H1 (cell line): ENCODE measurements at regions of chr4 and their contacts with region 1.

Region 1: GRCh38 chr4:25986807-25987206 is 72.8 kb downstream of the SMIM20 start:
- DNase-seq: peak in 1 of 2 experiments; percentile 23
- H3K4me3 ChIP-seq: no peak overlapping the region
- H3K27ac ChIP-seq: no peak overlapping the region
- H3K4me1 ChIP-seq: no peaks in the 10 kb centered on the region
- H3K27me3 ChIP-seq: no peaks in the 10 kb centered on the region
- CTCF ChIP-seq: no peak
- EP300 ChIP-seq: no peak
- POLR2A ChIP-seq: no peak
- RAD21 ChIP-seq: no peak

Region 2: DNA sequence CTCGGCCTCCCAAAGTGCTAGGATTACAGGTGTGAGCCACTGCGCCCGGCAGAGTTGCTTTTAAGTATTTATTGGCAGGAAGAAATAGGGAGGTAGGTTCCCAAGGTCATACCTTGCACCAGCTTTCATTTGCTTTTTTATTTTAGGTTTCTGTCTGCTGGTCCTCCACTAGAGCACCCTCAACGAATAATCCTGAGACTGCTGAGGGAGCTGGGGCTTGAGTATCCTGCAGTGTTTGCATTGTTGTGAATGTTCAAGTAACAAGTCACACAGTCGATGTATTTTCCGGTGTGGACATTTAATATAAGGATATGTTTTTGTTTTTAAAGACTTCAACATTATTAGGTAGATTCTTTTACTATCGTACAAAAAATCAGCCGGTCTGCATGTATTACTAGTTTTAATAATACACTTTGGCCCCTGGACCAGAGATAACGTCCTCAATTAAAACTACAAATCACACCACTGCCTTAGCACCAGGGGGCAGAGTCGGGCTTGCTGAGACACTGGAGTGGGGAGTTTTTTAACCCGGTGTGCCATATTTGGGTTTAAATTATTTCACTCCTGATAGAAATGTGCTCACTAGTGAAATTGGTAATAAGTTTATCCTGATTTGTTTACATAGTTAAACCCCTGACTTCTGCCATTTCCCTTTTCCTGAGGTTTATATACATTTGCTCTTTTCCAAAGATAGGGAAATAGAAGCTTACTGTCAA is 61.2 kb before region 1 on chr4:
- CTCF ChIA-PET with region 1: interaction called, 29 read pairs
- POLR2A ChIA-PET with region 1: no interaction called
- DNase-seq: peak in 1 of 2 experiments; percentile 64
- H3K4me3 ChIP-seq: no peak overlapping the region
- H3K27ac ChIP-seq: no peak overlapping the region
- H3K4me1 ChIP-seq: no peaks in the 10 kb centered on the region; a peak in 2 of 7 replicates
- H3K27me3 ChIP-seq: no peaks in the 10 kb centered on the region
- CTCF ChIP-seq: peak; percentile 59 to 69 (median 69)
- EP300 ChIP-seq: no peak
- POLR2A ChIP-seq: no peak
- RAD21 ChIP-seq: peak; percentile 74 to 83

Region 3: GRCh38 chr4:25962393-25962792 is 24.4 kb before region 1 on chr4:
- CTCF ChIA-PET with region 1: interaction called, 19 read pairs
- POLR2A ChIA-PET with region 1: interaction called, 3 read pairs
- DNase-seq: no peak
- H3K4me3 ChIP-seq: no peak overlapping the region
- H3K27ac ChIP-seq: no peak overlapping the region
- H3K4me1 ChIP-seq: peaks cover 0 to 5% (median 1%) of the 10 kb centered on the region in 4 experiments; a peak in 2 of 7 replicates
- H3K27me3 ChIP-seq: no peaks in the 10 kb centered on the region
- CTCF ChIP-seq: no peak
- EP300 ChIP-seq: no peak
- POLR2A ChIP-seq: no peak
- RAD21 ChIP-seq: no peak

Region 4: DNA sequence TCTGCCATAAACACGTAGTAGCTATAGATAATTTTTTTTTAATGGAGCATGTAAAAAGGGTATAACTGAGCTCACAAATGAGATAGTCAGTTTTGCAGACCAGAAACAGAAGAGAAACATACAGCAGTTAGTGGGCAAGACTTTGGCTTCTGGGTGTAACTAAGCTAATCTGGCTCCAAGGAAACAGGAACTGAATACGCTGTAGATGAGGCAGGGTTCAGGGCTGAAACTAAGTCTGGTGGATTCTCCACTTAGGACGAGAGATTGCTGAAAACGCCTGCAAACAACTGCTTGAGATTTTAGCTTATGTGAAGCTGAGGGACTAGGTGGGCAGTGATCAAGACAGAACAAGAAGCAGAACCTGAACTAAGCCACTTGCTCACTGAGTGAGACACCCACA is 19.0 kb after region 1 on chr4:
- CTCF ChIA-PET with region 1: interaction called, 19 read pairs
- POLR2A ChIA-PET with region 1: no interaction called
- DNase-seq: no peak
- H3K4me3 ChIP-seq: no peak overlapping the region
- H3K27ac ChIP-seq: no peak overlapping the region
- H3K4me1 ChIP-seq: no peaks in the 10 kb centered on the region
- H3K27me3 ChIP-seq: no peaks in the 10 kb centered on the region
- CTCF ChIP-seq: no peak
- EP300 ChIP-seq: no peak
- POLR2A ChIP-seq: no peak
- RAD21 ChIP-seq: no peak

Region 5: GRCh38 chr4:26069218-26069617 is 82.4 kb after region 1 on chr4:
- CTCF ChIA-PET with region 1: interaction called, 10 read pairs
- POLR2A ChIA-PET with region 1: interaction called, 3 read pairs
- DNase-seq: peak in 1 of 2 experiments; percentile 52
- H3K4me3 ChIP-seq: no peak overlapping the region
- H3K27ac ChIP-seq: no peak overlapping the region
- H3K4me1 ChIP-seq: no peaks in the 10 kb centered on the region
- H3K27me3 ChIP-seq: no peaks in the 10 kb centered on the region
- CTCF ChIP-seq: peak; percentile 39 to 79 (median 73)
- EP300 ChIP-seq: no peak
- POLR2A ChIP-seq: no peak
- RAD21 ChIP-seq: peak; percentile 73 to 84

Region 6: DNA sequence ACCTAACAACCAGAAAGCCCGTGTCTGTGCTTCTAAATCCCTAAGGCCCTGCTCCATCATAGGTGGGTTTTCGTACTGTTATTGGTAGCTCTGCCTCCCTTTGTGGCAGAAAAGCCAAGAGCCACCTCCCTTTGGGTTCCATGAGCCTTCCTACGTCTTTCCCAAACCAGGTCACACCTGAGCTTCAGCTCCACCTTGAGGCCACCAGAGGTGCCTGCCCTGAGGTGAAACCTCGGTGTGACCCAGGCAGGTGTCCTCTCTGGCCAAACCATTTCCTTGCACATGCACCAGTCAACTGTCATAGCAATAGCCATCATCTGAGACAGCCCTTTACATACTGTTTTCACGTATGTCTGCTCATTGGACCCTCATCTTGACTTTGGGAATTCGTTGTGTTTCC is 146.1 kb after region 1 on chr4:
- CTCF ChIA-PET with region 1: interaction called, 15 read pairs
- POLR2A ChIA-PET with region 1: no interaction called
- DNase-seq: no peak
- H3K4me3 ChIP-seq: no peak overlapping the region
- H3K27ac ChIP-seq: no peak overlapping the region
- H3K4me1 ChIP-seq: no peaks in the 10 kb centered on the region
- H3K27me3 ChIP-seq: no peaks in the 10 kb centered on the region
- CTCF ChIP-seq: peak; percentile 55 to 69 (median 64)
- EP300 ChIP-seq: no peak
- POLR2A ChIP-seq: no peak
- RAD21 ChIP-seq: peak; percentile 58 to 67

Region 7: GRCh38 chr4:26372525-26373172 is 385.8 kb after region 1 on chr4:
- CTCF ChIA-PET with region 1: no interaction called
- POLR2A ChIA-PET with region 1: no interaction called
- DNase-seq: no peak
- H3K4me3 ChIP-seq: no peak overlapping the region
- H3K27ac ChIP-seq: no peak overlapping the region
- H3K4me1 ChIP-seq: peaks cover 0 to 16% (median 10%) of the 10 kb centered on the region in 4 experiments; a peak in 4 of 7 replicates
- H3K27me3 ChIP-seq: no peaks in the 10 kb centered on the region
- CTCF ChIP-seq: no peak
- EP300 ChIP-seq: no peak
- POLR2A ChIP-seq: no peak
- RAD21 ChIP-seq: no peak